IMR-90 (cell line): ENCODE measurements at regions of chr19 and their contacts with region 1.

Region 1: DNA sequence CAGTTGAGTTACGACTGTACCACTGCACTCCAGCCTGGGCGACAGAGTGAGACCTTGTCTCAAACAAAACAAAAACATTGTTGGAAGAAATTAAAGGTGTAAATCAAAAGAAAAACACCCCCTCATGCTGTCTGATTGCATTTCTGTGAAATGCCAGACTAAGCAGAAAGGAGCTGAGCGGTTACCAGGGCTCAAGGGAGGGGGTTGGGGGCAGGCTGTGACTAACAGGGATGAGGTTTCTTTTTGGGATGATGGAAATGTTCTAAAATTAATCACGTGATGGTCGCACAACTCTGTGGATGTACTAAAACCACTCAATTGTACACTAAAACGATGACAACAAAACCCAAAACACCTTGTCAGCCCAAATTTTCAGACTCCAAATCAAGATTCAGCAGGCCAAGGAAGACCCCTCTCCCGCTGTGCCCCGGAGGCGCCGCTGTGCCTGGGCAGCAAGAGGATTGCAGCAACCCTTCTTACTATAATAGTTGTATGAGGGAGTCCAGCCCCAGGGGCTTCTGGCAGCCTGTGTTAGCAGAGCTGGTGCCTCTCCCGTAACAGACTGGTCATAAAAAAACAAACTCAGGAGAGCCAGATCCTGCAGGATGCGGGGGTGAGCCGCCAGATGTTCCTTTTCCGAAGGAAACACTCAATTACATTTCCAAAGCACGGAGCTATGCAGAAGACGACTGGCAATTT is 20.9 kb downstream of the CAPS start:
- DNase-seq: peak; percentile 90
- ATAC-seq: peak; percentile 90
- H3K4me3 ChIP-seq: no peak overlapping the region
- H3K27ac ChIP-seq: peak overlapping the region; percentile 69
- H3K4me1 ChIP-seq: peaks cover 32% of the 10 kb centered on the region
- H3K27me3 ChIP-seq: no peaks in the 10 kb centered on the region
- CTCF ChIP-seq: no peak
- POLR2A ChIP-seq: no peak
- RAD21 ChIP-seq: no peak; the same call in 1 of the 2 replicates

Region 2: DNA sequence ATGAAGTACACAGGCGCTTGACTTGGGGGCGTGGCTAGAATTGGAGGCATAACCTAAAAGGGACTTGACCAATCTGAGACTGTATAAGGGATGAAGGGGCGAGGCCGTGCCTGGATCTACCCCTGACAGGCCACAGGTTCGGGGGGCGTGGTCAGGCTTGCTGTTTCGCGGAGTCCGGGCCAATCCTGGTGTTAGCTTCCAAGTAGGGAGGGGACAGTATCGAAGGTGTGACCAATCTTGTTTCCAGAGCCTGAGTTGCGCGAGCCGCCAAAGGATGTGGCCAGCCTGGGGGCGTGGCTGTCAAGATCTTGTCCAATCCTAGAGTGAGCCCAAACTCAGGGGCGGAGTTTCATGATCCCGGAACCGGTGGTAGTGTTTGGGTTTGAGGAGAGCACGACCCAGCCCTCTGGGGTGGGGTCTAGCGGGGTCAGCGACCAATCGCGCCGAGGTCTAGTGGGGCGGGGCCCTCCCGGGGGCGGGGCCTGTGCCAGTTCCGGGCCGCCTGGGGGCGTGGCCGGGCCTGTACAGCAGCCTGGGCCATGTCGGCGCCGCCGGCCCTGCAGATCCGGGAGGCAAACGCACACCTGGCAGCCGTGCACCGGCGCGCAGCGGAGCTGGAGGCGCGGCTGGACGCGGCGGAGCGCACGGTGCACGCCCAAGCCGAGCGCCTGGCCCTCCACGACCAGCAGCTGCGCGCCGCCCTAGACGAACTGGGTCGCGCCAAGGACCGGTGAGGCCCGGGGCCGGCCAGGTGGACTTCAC is 30.4 kb before region 1 on chr19 and contains the start of gene VMAC:
- CTCF ChIA-PET with region 1: no interaction called
- POLR2A ChIA-PET with region 1: no interaction called
- dilution Hi-C with region 1: no loop called
- in situ Hi-C with region 1: no loop called
- intact Hi-C with region 1: loop called (anchors 2 kb)
- DNase-seq: peak; percentile 100
- ATAC-seq: peak; percentile 81
- H3K4me3 ChIP-seq: peak within 1 kb of the TSS; percentile 91
- H3K27ac ChIP-seq: peak within 1 kb of the TSS; percentile 70
- H3K4me1 ChIP-seq: peaks cover 4% of the 10 kb centered on the region
- H3K27me3 ChIP-seq: no peaks in the 10 kb centered on the region
- CTCF ChIP-seq: no peak
- POLR2A ChIP-seq: no peak
- RAD21 ChIP-seq: no peak
- total RNA-seq, gene VMAC: 1.4 and 1.7 TPM in 2 replicates

Region 3: GRCh38 chr19:5961969-5962945 is 27.3 kb after region 1 on chr19:
- CTCF ChIA-PET with region 1: interaction called, 11 read pairs
- POLR2A ChIA-PET with region 1: no interaction called
- dilution Hi-C with region 1: no loop called
- in situ Hi-C with region 1: no loop called
- intact Hi-C with region 1: loop called (anchors 1 kb)
- DNase-seq: peak; percentile 66
- ATAC-seq: peak; percentile 70
- H3K4me3 ChIP-seq: no peak overlapping the region
- H3K27ac ChIP-seq: peak overlapping the region; percentile 71
- H3K4me1 ChIP-seq: peaks cover 51% of the 10 kb centered on the region
- H3K27me3 ChIP-seq: no peaks in the 10 kb centered on the region
- CTCF ChIP-seq: no peak
- POLR2A ChIP-seq: no peak
- RAD21 ChIP-seq: no peak

Region 4: DNA sequence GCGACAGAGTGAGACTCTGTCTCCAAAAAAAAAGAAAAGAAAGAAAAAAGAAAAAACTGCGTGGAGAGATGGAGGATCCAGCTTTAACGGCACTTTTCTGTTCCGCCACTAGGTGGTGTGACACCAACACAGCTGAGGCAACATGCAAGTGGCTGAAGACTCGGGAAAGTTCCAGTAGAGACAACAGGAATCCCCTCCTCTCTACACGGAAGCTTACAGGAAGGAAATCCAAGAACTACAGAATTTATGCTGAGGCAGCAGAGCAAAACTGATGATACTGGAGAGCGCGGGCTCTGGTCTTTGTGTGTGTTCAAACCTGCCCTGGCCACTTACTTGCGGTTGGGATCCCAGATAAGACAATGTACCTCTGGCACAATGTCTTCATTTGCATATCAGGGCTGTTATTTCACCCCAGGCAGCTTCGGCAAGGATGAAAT is 33.1 kb after region 1 on chr19:
- CTCF ChIA-PET with region 1: interaction called, 11 read pairs
- POLR2A ChIA-PET with region 1: no interaction called
- dilution Hi-C with region 1: no loop called
- in situ Hi-C with region 1: no loop called
- intact Hi-C with region 1: no loop called
- DNase-seq: peak; percentile 88
- ATAC-seq: peak; percentile 70
- H3K4me3 ChIP-seq: no peak overlapping the region
- H3K27ac ChIP-seq: peak overlapping the region; percentile 99
- H3K4me1 ChIP-seq: peaks cover 41% of the 10 kb centered on the region
- H3K27me3 ChIP-seq: no peaks in the 10 kb centered on the region
- CTCF ChIP-seq: peak; percentile 78
- POLR2A ChIP-seq: no peak
- RAD21 ChIP-seq: peak; percentile 65